Mammary epithelial cell (primary cell): ENCODE measurements at regions of chr15 and their contacts with region 1.

Region 1: GRCh38 chr15:84929744-84930371 is 45.4 kb downstream of the SLC28A1 start:
- DNase-seq: peak; percentile 98
- H3K4me3 ChIP-seq: no peak overlapping the region
- H3K27ac ChIP-seq: peak overlapping the region; percentile 11
- H3K4me1 ChIP-seq: peaks cover 13% of the 10 kb centered on the region
- H3K27me3 ChIP-seq: no peaks in the 10 kb centered on the region
- CTCF ChIP-seq: no peak

Region 2: DNA sequence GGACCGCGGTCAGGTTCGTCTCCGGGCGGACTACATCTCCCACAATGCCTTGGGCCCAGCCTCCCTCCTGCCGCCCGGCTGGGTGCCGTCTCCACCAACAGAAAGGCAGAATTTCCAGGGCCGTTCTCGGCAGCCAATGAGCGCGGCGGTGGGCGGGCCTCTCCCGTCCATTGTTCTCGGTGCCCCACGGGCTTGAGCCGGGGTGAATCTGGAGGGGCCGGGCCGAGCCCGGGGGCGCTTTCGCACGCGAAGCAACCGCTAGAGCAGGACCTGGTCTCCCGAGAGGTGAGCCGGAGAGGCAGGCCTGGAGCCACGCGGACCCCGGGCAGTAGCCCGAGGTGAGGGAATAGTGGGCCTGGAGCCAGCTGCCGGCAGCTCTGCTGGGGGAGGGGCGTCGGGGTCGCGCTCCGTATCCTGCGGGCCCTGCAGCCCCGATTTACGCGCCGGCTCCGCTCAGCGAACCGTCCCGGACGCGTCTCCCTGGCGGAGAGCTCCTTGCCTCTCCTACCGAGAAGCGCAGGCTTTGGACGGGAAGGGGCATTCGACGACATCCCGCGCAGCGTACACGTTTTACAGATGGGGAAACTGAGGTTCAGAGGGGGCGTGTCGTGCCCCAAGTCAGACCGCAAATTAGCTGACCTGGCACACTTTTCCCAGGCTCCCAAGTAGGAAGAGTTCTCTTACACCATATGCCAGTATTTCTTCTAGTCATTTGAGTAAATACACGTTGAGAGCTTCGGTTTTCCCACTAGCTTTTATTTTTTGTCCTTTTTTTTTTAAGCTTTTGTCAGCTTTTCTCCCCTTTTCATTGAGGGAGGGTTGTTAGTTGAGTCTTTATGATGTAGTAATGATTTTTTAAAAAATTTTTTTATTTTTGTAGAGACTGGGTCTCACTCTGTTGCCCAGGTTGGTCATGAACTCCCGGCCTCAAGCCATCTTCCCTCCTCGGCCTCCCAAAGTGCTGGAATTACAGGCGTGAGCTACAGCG is 328.7 kb before region 1 on chr15 and contains the start of gene ZSCAN2:
- CTCF ChIA-PET with region 1: no interaction called
- dilution Hi-C with region 1: no loop called
- in situ Hi-C with region 1: loop called in 1 of 2 experiments (anchors 10 kb)
- intact Hi-C with region 1: loop called (anchors 1 kb)
- DNase-seq: peak; percentile 92
- H3K4me3 ChIP-seq: peak within 1 kb of the TSS; percentile 89 to 95 (median 91)
- H3K27ac ChIP-seq: peak within 1 kb of the TSS; percentile 15
- H3K4me1 ChIP-seq: peaks cover 11% of the 10 kb centered on the region
- H3K27me3 ChIP-seq: no peaks in the 10 kb centered on the region
- CTCF ChIP-seq: no peak
- total RNA-seq, gene ZSCAN2: 5.0 to 6.3 TPM

Region 3: DNA sequence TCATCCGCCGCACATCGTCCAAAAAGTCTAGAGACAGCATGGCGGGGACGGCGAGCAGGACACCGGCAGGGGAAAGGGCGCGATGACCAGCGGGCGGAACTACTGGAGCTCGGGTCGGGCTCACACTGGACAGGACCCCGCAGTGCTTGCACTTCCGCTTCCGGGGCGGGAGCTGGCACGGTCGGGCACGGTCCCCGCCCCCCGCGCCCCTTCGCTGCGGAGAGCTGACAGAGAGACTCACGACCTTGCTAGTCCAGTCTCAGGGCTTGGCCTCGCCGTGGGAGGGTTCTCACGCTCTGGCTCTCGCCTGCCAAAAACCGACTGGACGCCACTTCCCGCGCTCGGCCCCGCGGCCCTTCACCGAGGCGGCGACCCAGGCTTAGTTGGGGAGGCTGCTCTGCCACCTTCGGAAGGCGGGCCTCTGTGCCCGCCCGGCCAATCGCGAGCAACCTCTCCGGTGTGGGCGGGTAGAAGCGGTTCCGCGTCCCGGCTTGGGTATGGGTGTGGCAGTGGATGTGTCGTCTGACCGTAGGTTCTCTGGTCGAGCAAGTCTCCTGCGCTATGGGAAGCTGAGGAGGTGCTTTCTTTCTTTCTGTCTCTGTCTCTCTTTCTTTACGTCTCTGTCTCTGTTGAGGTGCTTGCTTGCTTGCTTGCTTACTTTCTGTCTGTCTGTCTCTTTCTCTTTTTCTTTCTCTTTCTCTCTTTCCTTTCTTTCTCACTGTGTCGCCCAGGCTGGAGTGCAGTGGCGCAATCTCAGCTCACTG is 213.6 kb before region 1 on chr15 and contains the start of gene SEC11A:
- CTCF ChIA-PET with region 1: no interaction called
- dilution Hi-C with region 1: no loop called
- in situ Hi-C with region 1: no loop called
- intact Hi-C with region 1: loop called (anchors 1 kb)
- DNase-seq: peak; percentile 97
- H3K4me3 ChIP-seq: peak within 1 kb of the TSS; percentile 71 to 97 (median 85)
- H3K27ac ChIP-seq: peak within 1 kb of the TSS; percentile 66
- H3K4me1 ChIP-seq: peaks cover 10% of the 10 kb centered on the region
- H3K27me3 ChIP-seq: no peaks in the 10 kb centered on the region
- CTCF ChIP-seq: no peak
- total RNA-seq, gene SEC11A: 130 to 146 TPM

Region 4: GRCh38 chr15:84826369-84826823 is 103.5 kb before region 1 on chr15:
- CTCF ChIA-PET with region 1: no interaction called
- dilution Hi-C with region 1: no loop called
- in situ Hi-C with region 1: no loop called
- intact Hi-C with region 1: loop called (anchors 1 kb)
- DNase-seq: peak; percentile 36
- H3K4me3 ChIP-seq: no peak overlapping the region
- H3K27ac ChIP-seq: no peak overlapping the region
- H3K4me1 ChIP-seq: no peaks in the 10 kb centered on the region
- H3K27me3 ChIP-seq: no peaks in the 10 kb centered on the region
- CTCF ChIP-seq: peak; percentile 39 to 44

Region 5: GRCh38 chr15:84859155-84859554 is 70.7 kb before region 1 on chr15:
- CTCF ChIA-PET with region 1: no interaction called
- dilution Hi-C with region 1: no loop called
- in situ Hi-C with region 1: loop called in 1 of 2 experiments (anchors 10 kb)
- intact Hi-C with region 1: no loop called
- DNase-seq: peak; percentile 82
- H3K4me3 ChIP-seq: no peak overlapping the region
- H3K27ac ChIP-seq: no peak overlapping the region
- H3K4me1 ChIP-seq: peaks cover 24% of the 10 kb centered on the region
- H3K27me3 ChIP-seq: no peaks in the 10 kb centered on the region
- CTCF ChIP-seq: no peak

Region 6: GRCh38 chr15:85164809-85165463 is 235.1 kb after region 1 on chr15:
- CTCF ChIA-PET with region 1: no interaction called
- dilution Hi-C with region 1: no loop called
- in situ Hi-C with region 1: no loop called
- intact Hi-C with region 1: no loop called
- DNase-seq: peak; percentile 13
- H3K4me3 ChIP-seq: no peak overlapping the region
- H3K27ac ChIP-seq: no peak overlapping the region
- H3K4me1 ChIP-seq: no peaks in the 10 kb centered on the region
- H3K27me3 ChIP-seq: no peaks in the 10 kb centered on the region
- CTCF ChIP-seq: no peak